Dorsolateral prefrontal cortex (tissue), 120 donors: ENCODE measurements at regions of chr1 and their contacts with region 1.

Region 1: GRCh38 chr1:42456010-42456758 is at the starts of genes PPCS and ZMYND12:
- DNase-seq: peak; percentile 67 to 85 (median 80)
- H3K4me3 ChIP-seq: peak within 1 kb of the TSS; percentile 66 to 99 (median 92)
- H3K27ac ChIP-seq: peak within 1 kb of the TSS; percentile 46 to 97 (median 92)
- H3K27me3 ChIP-seq: no peaks in the 10 kb centered on the region
- CTCF ChIP-seq: peak in 13 of 56 donors; percentile 2 to 31 (median 14)
- total RNA-seq, gene PPCS: 20.6 to 46.2 (median 30.0) TPM
- total RNA-seq, gene ZMYND12: 0.77 to 9.6 (median 3.4) TPM

Region 2: DNA sequence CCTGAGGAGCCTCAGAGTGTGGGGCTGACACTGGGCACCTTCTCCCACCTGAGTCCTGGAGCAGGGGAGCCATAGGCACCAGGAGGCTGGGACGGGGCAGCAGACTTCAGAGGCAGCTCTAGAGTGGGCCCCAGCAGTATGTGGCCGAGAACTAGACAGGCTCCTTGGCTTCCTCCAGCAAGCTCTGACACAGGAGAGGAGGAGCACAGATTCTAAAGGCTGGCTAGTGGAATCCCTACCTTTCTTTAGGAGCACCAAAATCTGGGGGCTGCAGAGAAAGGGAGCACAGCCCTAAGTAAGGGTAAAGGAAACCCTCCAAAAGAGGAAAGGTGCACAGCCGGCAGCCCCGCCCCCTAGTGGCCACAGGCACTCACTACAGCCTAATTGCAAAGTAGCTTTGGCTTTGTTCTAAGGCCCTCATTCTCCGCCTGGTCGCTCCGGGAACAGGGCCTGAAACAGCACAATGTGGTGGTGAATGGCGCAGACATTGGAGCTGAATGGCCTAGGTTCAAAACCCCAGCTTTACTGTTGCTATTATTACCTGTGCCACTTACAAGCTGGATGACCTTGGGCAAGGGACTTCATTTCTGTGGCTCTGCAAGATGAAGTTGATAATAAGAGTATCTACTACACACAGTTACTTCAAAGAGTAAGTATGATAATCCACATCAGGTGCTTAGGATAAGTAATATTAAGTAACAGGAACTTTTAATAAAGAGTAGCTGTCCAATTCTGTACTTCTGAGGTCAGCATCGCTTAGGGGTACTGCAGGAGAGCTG is 282.8 kb before region 1 on chr1:
- intact Hi-C with region 1: loop called in 1 of 2 experiments (anchors 5 kb)
- DNase-seq: peak in 9 of 10 donors; percentile 57 to 79 (median 71)
- H3K4me3 ChIP-seq: peak overlapping the region in 1 of 59 donors; percentile 0
- H3K27ac ChIP-seq: peak overlapping the region in 36 of 59 donors; percentile 0 to 64 (median 30)
- H3K27me3 ChIP-seq: no peaks in the 10 kb centered on the region
- CTCF ChIP-seq: peak; percentile 76 to 99 (median 95)

Region 3: GRCh38 chr1:42420911-42421585 is 35.1 kb before region 1 on chr1:
- intact Hi-C with region 1: loop called in 1 of 2 experiments (anchors 2 kb)
- DNase-seq: peak; percentile 38 to 72 (median 62)
- H3K4me3 ChIP-seq: peak overlapping the region in 4 of 59 donors; percentile 4 to 28 (median 26)
- H3K27ac ChIP-seq: peak overlapping the region in 25 of 59 donors; percentile 2 to 67 (median 26)
- H3K27me3 ChIP-seq: no peaks in the 10 kb centered on the region
- CTCF ChIP-seq: no peak

Region 4: DNA sequence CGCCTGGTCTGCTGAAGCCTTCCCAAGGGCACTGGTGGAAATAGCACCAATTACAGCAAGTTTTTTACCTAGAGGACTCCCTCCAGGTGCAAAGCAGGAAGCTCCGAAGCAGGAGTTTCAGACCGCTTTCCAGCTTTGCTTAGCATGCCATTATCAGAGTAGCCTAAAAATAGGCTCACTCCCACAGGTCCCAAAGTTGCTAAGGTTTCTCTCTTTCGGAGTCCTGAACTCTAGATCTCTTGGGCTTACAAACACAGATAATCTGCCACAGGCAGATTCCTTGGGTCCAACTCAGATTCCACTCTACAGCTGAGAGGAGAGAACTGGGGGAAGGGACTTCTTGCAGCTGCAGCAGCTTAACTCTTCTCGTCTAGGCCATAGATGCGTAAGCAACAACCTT is 22.8 kb before region 1 on chr1:
- intact Hi-C with region 1: no loop called
- DNase-seq: no peak
- H3K4me3 ChIP-seq: no peak overlapping the region
- H3K27ac ChIP-seq: no peak overlapping the region
- H3K27me3 ChIP-seq: no peaks in the 10 kb centered on the region
- CTCF ChIP-seq: no peak

Region 5: GRCh38 chr1:42504535-42505128 is 48.4 kb after region 1 on chr1:
- intact Hi-C with region 1: no loop called
- DNase-seq: no peak
- H3K4me3 ChIP-seq: no peak overlapping the region
- H3K27ac ChIP-seq: no peak overlapping the region
- H3K27me3 ChIP-seq: no peaks in the 10 kb centered on the region
- CTCF ChIP-seq: no peak